ENCODE measurements at regions of chr1 and their contacts with region 1.

Region 1: GRCh38 chr1:1435106-1435903 is at the start of gene VWA1:
- DNase-seq: peak; percentile 51
- H3K4me3 ChIP-seq: peak within 1 kb of the TSS in 2 of 3 experiments; percentile 47 to 52
- H3K27ac ChIP-seq: no peak within 1 kb of the TSS
- H3K4me1 ChIP-seq: peaks cover 48% of the 10 kb centered on the region
- H3K27me3 ChIP-seq: no peaks in the 10 kb centered on the region
- CTCF ChIP-seq: no peak
- total RNA-seq, gene VWA1: 11.3 to 27.3 TPM

Region 2: GRCh38 chr1:1528301-1529267 is 93.3 kb after region 1 on chr1:
- CTCF ChIA-PET with region 1: no interaction called
- dilution Hi-C with region 1: loop called (anchors 5 kb)
- in situ Hi-C with region 1: no loop called
- intact Hi-C with region 1: no loop called
- DNase-seq: no peak
- H3K4me3 ChIP-seq: no peak overlapping the region
- H3K27ac ChIP-seq: no peak overlapping the region
- H3K4me1 ChIP-seq: no peaks in the 10 kb centered on the region
- H3K27me3 ChIP-seq: no peaks in the 10 kb centered on the region
- CTCF ChIP-seq: no peak

Region 3: DNA sequence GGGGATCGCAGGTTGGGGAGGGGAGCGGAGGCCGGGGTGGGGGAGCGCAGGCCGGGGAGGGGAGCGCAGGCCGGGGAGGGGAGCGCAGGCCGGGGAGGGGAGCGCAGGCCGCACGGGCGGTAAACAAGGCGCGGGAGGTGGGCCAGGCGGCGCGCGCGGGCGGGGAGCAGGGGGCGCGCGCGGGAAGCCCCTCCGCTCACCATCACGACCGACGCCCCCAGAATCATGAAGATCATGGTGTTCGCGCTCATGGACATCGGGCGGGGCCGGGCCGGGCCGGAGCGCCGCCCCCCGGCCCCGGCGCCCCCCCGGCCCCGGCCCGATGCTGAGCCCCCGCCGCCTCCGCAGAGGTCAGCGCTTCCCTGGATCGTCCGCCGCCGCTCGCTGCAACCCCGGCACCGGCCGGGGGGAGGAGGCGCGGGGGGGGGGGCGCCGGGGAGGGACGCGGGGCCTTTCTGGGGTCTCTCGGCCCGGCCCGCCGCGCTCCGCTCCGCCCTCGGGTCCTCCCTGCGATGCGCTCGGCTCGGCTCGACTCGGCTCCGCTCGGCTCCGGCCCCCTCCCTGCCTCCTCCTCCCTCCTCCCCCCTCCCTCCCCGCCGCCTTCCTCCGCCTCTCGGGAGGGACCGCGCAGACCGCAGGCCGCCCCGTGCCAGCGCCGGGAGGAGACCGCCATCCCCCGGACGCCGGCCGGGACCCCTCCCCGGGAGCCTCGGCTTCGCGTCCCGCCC is 104.9 kb after region 1 on chr1 and contains the start of gene TMEM240:
- CTCF ChIA-PET with region 1: no interaction called
- dilution Hi-C with region 1: no loop called
- in situ Hi-C with region 1: no loop called
- intact Hi-C with region 1: no loop called
- DNase-seq: no peak
- H3K4me3 ChIP-seq: no peak within 1 kb of the TSS
- H3K27ac ChIP-seq: no peak within 1 kb of the TSS
- H3K4me1 ChIP-seq: no peaks in the 10 kb centered on the region
- H3K27me3 ChIP-seq: no peaks in the 10 kb centered on the region
- CTCF ChIP-seq: no peak
- total RNA-seq, gene TMEM240: 0.67 to 1.1 TPM